OCI-LY7 (cell line): ENCODE measurements at regions of chr14 and their contacts with region 1.

Region 1: GRCh38 chr14:80186301-80186810 is 24.9 kb downstream of the DIO2 start:
- DNase-seq: no peak
- H3K4me3 ChIP-seq: no peak overlapping the region
- H3K27ac ChIP-seq: no peak overlapping the region
- H3K4me1 ChIP-seq: no peaks in the 10 kb centered on the region
- CTCF ChIP-seq: no peak

Region 2: DNA sequence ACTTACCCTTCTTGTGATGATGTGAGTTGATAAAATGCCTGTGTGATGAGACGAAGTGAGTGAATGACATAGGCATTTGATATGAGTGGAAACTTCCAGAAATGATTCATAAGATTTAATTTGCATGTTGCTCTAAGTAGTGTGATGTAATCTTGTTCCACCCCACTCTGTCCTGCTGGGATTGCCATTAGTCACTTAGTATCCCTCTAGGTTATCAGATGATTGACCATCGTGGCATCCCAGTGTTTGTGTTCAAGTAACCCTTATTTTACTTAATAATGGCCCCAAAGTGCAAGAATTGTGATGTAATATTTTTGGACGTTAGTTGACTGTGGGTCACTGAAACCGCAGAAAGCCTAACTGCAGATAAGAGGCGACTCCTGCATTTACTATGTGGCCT is 239.3 kb after region 1 on chr14:
- CTCF ChIA-PET with region 1: no interaction called
- POLR2A ChIA-PET with region 1: interaction called, 11 read pairs
- intact Hi-C with region 1: no loop called
- DNase-seq: no peak
- H3K4me3 ChIP-seq: no peak overlapping the region
- H3K27ac ChIP-seq: no peak overlapping the region
- H3K4me1 ChIP-seq: no peaks in the 10 kb centered on the region
- CTCF ChIP-seq: no peak